ENCODE measurements at regions of chr11 and their contacts with region 1.

Region 1: GRCh38 chr11:6362873-6363678 is 27.2 kb upstream of the SMPD1 start:
- DNase-seq: peak; percentile 34 to 67 (median 61)
- ATAC-seq: peak; percentile 92
- H3K4me3 ChIP-seq: no peak overlapping the region
- H3K4me3 Mint-ChIP-seq: no peak overlapping the region
- H3K27ac ChIP-seq: no peak overlapping the region
- H3K27ac Mint-ChIP-seq: no peak overlapping the region
- H3K4me1 ChIP-seq: no peaks in the 10 kb centered on the region
- H3K4me1 Mint-ChIP-seq: peaks cover 0 to 1% (median 0%) of the 10 kb centered on the region in 7 donors
- H3K27me3 ChIP-seq: no peaks in the 10 kb centered on the region
- H3K27me3 Mint-ChIP-seq: no peaks in the 10 kb centered on the region

Region 2: DNA sequence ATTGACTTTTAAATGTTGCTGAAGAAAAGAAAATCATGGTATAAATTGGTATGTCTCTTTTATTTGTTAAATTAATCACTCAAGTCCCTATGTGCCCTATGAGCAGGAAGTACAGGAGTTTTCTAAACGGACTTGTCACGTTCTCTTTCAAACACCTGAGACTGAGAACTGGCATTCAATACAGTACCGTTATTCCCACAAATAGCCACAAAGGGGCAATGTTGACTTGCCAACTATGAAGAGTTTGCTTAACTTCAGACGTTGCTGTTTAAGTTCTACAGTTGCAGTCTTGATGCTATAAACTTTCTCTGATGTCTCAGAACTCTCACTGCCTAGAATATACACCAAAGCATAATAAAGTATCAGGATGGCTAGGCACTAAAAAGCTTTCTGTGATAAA is 340.1 kb before region 1 on chr11:
- CTCF ChIA-PET with region 1: interaction called, 7 read pairs
- POLR2A ChIA-PET with region 1: no interaction called
- intact Hi-C with region 1: loop called in 1 of 2 experiments (anchors 1 kb)
- DNase-seq: peak in 5 of 9 donors; percentile 10 to 31 (median 24)
- ATAC-seq: peak; percentile 75
- H3K4me3 ChIP-seq: no peak overlapping the region
- H3K4me3 Mint-ChIP-seq: no peak overlapping the region
- H3K27ac ChIP-seq: no peak overlapping the region
- H3K27ac Mint-ChIP-seq: no peak overlapping the region
- H3K4me1 ChIP-seq: no peaks in the 10 kb centered on the region
- H3K4me1 Mint-ChIP-seq: no peaks in the 10 kb centered on the region
- H3K27me3 ChIP-seq: no peaks in the 10 kb centered on the region
- H3K27me3 Mint-ChIP-seq: peaks cover 30 to 50% (median 35%) of the 10 kb centered on the region in 5 donors

Region 3: DNA sequence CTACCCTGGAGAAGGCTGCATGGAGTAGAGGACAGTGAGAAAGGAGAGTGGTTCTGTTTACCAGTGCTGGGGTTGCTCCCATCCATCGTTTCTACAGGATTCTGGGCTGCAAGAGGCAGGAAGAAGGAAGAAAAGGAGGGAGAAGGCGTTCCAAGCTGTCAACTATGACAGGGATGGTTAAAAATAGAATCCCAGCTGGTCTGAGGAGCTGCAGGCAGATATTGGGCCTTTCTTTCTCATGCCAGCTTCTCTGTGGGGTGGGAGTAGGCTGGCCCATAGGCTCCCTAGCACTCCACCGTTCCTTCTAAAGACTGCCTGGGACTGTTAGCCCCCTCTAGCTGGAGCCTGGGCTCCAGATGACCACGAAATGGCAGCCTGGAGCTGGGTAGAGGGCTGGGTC is 89.9 kb before region 1 on chr11:
- CTCF ChIA-PET with region 1: no interaction called
- POLR2A ChIA-PET with region 1: no interaction called
- intact Hi-C with region 1: no loop called
- DNase-seq: no peak
- ATAC-seq: no peak
- H3K4me3 ChIP-seq: no peak overlapping the region
- H3K4me3 Mint-ChIP-seq: no peak overlapping the region
- H3K27ac ChIP-seq: no peak overlapping the region
- H3K27ac Mint-ChIP-seq: no peak overlapping the region
- H3K4me1 ChIP-seq: no peaks in the 10 kb centered on the region
- H3K4me1 Mint-ChIP-seq: peaks cover 0 to 4% (median 0%) of the 10 kb centered on the region in 7 donors
- H3K27me3 ChIP-seq: no peaks in the 10 kb centered on the region
- H3K27me3 Mint-ChIP-seq: peaks cover 44 to 74% (median 59%) of the 10 kb centered on the region in 5 donors